Right ventricle myocardium inferior (tissue), 1 donor: ENCODE measurements at regions of chr12 and their contacts with region 1.

Region 1: GRCh38 chr12:126747530-126748149 is 1519.3 kb upstream of the TMEM132C start:
- DNase-seq: peak; percentile 60
- ATAC-seq: no peak

Region 2: DNA sequence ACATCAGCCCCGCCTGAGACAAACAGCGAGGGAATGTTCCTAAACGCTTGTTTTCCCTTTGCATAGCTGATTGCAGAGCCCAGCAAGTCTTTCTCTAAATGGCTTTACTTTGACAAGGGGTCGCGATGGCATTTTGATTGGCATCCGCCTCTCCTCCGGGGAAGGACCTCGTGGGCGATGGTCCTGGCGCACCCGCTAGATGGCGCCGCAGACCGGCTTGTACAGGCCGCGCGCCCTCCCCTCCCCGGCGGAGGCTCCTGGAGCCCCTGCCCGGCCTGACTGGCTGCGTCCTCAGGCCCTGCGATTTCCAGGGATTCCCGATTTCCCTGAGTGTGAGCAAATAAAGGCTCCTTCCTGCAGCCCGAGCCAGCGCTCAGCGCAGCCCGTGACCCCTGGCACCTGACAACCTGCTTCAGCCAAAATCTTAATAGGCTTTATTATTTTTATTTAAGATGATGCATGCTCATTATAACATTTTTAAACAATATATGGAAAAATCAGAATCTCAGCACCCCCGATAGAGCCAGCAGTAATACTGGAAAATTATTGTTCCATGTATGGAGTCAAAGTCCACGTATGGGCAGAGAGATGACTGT is 1214.1 kb before region 1 on chr12:
- intact Hi-C with region 1: loop called (anchors 5 kb)
- DNase-seq: peak; percentile 74
- ATAC-seq: peak; percentile 50

Region 3: DNA sequence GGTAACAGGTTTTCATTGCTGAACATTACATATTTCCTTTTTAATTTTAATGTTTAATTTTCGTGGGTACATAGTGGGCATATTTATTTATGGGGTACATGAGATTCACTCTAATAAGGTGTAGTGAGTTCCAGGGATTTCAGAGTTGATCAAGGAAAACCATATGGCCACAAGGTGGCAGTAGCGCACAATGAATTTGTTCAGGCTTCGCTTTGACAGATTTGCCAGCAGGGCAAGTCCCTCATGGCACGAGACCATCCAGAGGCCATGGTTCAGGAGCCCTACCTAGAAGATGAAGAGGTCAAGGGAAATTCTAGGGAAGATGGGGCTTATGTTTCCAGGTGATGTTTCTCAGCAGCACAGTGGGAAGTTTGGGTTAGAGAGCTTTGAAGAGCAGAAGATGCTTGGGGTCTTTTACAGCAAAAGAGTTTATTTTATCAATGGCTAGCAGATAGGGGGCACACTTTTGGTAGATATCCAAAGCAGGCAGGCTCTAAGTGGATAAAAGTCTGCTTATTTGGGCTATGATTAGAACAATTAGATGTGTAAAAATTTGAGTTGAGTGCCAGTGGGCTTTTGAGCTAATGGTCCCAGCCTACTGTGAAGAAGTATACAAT is 678.0 kb before region 1 on chr12:
- intact Hi-C with region 1: loop called (anchors 5 kb)
- DNase-seq: no peak
- ATAC-seq: no peak